ENCODE measurements at regions of chr3 and their contacts with region 1.

Region 1: DNA sequence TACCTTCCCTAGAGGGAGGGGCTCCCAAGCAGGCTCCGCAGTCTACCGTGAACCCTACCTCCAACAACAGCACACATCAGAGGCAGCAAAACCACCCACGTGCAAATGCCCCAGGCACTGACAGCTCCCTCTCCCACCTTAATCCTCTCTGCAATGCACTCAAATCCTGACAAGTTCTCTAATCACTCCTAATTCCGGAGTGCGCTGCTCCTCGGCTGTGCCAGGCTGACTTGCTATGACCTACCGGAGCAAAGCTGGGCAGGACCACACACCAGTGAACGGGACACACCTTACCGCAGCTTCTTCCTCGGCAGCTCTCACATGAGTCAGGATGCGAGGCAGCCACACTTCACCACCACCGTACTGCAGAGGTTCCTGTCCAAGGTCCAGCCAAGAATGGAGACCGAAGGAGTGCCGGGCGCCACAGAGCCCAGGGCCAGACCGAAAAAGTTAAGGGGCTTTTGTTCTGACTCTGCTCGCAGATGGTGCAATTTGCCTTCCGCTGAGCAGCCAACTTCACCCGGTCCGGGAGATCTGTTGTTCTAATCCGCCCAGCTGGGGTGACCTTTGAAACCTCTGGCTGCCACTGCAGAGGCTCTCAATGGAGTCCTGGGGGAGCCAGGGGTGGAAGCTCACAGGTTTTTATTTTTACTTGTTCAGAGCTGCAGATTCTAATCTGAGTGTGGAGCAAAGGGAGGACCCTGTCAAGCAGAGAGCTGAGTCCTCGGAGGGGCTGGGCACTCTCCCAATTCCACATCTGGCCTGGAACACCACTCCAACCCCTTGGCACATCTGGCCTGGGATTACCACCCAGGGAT is 84.4 kb downstream of the MYLK start:
- DNase-seq: peak; percentile 52 to 55
- H3K4me3 ChIP-seq: peak overlapping the region; percentile 46
- H3K4me3 Mint-ChIP-seq: peak overlapping the region; percentile 73
- H3K27ac Mint-ChIP-seq: peak overlapping the region; percentile 53
- H3K4me1 ChIP-seq: peaks cover 26% of the 10 kb centered on the region
- H3K4me1 Mint-ChIP-seq: peaks cover 26% of the 10 kb centered on the region
- H3K27me3 ChIP-seq: no peaks in the 10 kb centered on the region
- H3K27me3 Mint-ChIP-seq: no peaks in the 10 kb centered on the region
- CTCF ChIP-seq: no peak

Region 2: DNA sequence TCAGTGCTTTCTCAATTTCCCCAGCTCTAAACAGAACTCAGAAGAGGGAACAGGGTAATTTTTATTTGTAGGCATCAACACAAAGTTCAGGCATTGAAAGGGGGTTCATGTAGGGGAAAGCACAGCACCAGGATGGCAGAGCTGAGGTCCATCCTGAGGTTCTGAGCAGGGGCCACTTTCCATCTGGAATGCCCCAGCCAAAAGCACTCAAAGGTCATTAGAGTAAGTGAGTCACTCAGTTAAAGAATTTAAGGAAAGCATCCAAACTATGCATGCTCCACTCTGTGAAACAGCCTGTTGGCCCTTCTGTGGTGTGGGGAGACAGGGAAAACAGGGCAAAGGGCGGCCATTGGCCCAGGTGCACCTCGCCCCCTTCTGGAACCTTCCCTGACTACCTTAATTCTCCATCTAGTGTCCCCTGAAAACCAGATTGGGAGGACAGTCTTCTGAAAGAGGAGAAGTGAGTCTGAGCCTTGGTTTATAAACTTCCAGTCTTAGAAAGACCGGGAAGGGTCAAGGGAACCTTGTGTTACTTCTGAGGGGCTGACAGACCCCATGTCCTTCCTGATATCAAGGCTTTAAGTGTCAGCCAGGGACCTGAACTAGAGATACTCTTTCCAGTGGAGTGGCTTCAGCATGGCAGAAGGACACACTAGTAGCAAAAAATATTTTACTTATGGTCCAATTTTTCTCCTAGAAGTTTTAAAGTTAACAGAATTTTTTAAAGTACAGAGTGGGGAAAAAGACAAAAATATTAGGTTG is 48.9 kb before region 1 on chr3:
- CTCF ChIA-PET with region 1: no interaction called
- POLR2A ChIA-PET with region 1: no interaction called
- intact Hi-C with region 1: loop called (anchors 1 kb)
- DNase-seq: peak; percentile 75 to 87
- H3K4me3 ChIP-seq: no peak overlapping the region
- H3K4me3 Mint-ChIP-seq: peak overlapping the region; percentile 34
- H3K27ac Mint-ChIP-seq: peak overlapping the region; percentile 94
- H3K4me1 ChIP-seq: peaks cover 59% of the 10 kb centered on the region
- H3K4me1 Mint-ChIP-seq: peaks cover 33% of the 10 kb centered on the region
- H3K27me3 ChIP-seq: no peaks in the 10 kb centered on the region
- H3K27me3 Mint-ChIP-seq: no peaks in the 10 kb centered on the region
- CTCF ChIP-seq: no peak

Region 3: GRCh38 chr3:123960781-123961507 is 161.2 kb after region 1 on chr3 and contains the start of gene CCDC14:
- CTCF ChIA-PET with region 1: no interaction called
- POLR2A ChIA-PET with region 1: interaction called, 11 read pairs
- intact Hi-C with region 1: no loop called
- DNase-seq: peak; percentile 95 to 98
- H3K4me3 ChIP-seq: peak within 1 kb of the TSS; percentile 66
- H3K4me3 Mint-ChIP-seq: peak within 1 kb of the TSS; percentile 90
- H3K27ac Mint-ChIP-seq: peak within 1 kb of the TSS; percentile 95
- H3K4me1 ChIP-seq: no peaks in the 10 kb centered on the region
- H3K4me1 Mint-ChIP-seq: no peaks in the 10 kb centered on the region
- H3K27me3 ChIP-seq: no peaks in the 10 kb centered on the region
- H3K27me3 Mint-ChIP-seq: no peaks in the 10 kb centered on the region
- CTCF ChIP-seq: no peak
- total RNA-seq, gene CCDC14: 41.7 and 43.5 TPM in 2 replicates

Measured in Caco-2 (cell line).